Common myeloid progenitor, CD34-positive (primary cell): ENCODE measurements at regions of chr5 and their contacts with region 1.

Region 1: GRCh38 chr5:150560401-150561193 is 52.7 kb downstream of the NDST1 start:
- DNase-seq: peak; percentile 87 to 95 (median 88)
- H3K4me3 ChIP-seq: no peak overlapping the region
- H3K27ac ChIP-seq: no peak overlapping the region
- H3K4me1 ChIP-seq: peaks cover 0 to 30% (median 18%) of the 10 kb centered on the region in 4 experiments
- H3K27me3 ChIP-seq: no peaks in the 10 kb centered on the region

Region 2: DNA sequence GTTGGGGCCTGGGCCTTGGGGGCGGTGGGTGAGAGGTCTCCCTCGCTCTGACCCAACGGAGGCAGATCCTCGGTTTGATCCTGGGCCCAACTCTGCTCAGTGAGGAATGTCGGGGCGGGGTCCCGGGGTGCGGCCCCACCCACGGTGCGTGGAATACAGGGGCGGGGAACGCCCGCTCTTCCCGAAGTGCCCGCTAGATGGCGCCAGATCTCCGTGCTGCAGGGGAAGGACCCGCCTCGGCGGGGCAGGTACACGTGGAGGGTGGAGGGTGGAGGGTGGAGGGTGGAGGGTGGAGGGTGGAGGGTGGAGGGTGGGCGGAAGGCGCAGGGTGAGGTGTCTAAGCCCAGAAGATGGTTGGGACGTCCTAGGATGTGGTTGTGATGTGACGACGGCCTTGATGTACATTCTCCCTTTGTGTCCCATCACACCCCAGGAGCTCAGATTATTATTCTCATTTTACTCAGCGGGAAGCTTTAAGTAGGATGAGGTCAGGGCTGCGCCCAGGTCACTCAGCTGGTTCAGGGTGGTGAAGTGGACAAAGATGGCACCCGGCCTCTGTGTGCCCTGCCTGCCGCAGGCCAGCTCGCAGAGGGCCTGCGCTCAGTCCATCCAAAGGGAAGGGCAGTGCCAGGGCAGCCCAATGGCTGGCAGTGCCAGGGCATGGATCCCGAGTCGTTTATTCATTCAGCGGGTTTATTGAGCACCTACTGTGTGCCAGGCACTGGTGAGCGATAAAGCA is 101.6 kb before region 1 on chr5:
- CTCF ChIA-PET with region 1: interaction called, 28 read pairs
- POLR2A ChIA-PET with region 1: no interaction called
- DNase-seq: peak; percentile 59 to 79 (median 74)
- H3K4me3 ChIP-seq: peak overlapping the region in 3 of 7 experiments; percentile 32 to 56 (median 54)
- H3K27ac ChIP-seq: no peak overlapping the region
- H3K4me1 ChIP-seq: peaks cover 14 to 82% (median 59%) of the 10 kb centered on the region in 4 experiments
- H3K27me3 ChIP-seq: no peaks in the 10 kb centered on the region

Region 3: DNA sequence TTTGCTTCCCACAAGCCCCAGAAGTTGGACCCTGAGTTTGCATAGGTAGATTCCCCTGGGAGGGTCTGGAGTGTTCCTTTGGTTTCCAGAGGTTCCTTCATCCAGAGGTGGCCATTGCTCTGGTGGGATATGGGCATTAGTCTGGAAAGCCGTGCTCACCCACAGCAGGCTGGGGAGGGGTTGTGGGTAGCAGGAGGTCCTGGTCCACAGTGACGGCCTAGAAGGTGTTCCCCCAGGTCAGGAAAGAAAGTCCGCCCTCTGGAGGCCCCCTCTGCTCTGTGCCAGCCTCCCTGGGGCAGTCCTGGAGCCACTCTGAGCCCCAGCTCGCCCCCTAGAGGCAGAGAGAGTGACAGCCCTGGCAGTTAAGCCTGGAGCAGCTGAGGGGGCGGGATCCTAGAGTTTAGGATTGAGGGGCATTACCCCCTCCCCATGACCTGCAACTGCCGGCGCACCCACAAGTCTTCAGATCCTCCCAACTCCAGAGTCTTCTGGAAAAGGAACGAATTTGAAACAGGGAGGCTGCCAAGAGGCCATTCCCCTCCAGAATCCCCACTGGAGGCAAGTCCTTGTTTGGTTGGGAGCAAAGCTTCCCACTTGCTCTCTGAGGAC is 15.9 kb before region 1 on chr5:
- CTCF ChIA-PET with region 1: interaction called, 48 read pairs
- POLR2A ChIA-PET with region 1: no interaction called
- DNase-seq: peak; percentile 55 to 63 (median 57)
- H3K4me3 ChIP-seq: no peak overlapping the region
- H3K27ac ChIP-seq: no peak overlapping the region
- H3K4me1 ChIP-seq: peaks cover 0 to 19% (median 9%) of the 10 kb centered on the region in 4 experiments
- H3K27me3 ChIP-seq: no peaks in the 10 kb centered on the region

Region 4: GRCh38 chr5:150575745-150576448 is 15.3 kb after region 1 on chr5:
- CTCF ChIA-PET with region 1: interaction called, 13 read pairs
- POLR2A ChIA-PET with region 1: no interaction called
- DNase-seq: no peak
- H3K4me3 ChIP-seq: no peak overlapping the region
- H3K27ac ChIP-seq: no peak overlapping the region
- H3K4me1 ChIP-seq: no peaks in the 10 kb centered on the region
- H3K27me3 ChIP-seq: no peaks in the 10 kb centered on the region

Region 5: DNA sequence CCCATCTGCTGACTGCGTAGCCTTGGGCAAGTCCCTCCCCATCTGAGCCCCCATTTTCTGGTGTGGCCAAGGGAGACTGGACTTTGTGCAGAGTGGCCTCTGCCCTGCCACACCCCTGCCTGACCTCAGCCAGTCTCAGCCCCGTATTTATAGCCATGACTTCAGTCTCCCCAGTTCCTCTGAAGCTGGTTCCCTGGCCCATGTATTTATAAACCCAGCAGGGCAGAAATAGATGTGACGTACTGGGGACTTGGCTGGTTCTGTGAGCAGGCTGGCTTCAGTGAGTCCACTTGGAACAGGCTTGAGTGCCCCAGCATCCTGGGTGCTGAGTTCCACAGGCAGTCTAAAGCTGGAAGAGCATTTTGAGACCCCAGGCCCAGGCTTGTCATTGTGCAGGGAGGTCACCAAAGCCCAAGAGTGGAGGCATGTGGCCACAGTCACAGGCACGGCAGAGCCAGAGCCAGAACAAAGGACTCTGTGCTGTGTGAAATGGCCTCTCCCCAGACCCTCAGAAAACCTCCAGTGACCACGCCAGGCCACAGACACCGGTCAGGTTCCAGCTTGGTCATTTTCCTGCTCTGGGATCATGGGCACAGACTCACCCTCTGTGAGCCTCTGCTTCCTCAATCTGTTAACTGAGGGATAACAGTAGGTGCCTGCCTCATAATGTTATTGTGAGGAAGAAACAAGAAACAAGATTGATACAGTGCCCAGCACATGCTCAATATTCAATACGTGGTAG is 49.4 kb after region 1 on chr5:
- CTCF ChIA-PET with region 1: no interaction called
- POLR2A ChIA-PET with region 1: no interaction called
- DNase-seq: no peak
- H3K4me3 ChIP-seq: no peak overlapping the region
- H3K27ac ChIP-seq: no peak overlapping the region
- H3K4me1 ChIP-seq: no peaks in the 10 kb centered on the region
- H3K27me3 ChIP-seq: peaks cover 0 to 2% (median 0%) of the 10 kb centered on the region in 5 experiments

Region 6: GRCh38 chr5:150656191-150657132 is 95.9 kb after region 1 on chr5:
- CTCF ChIA-PET with region 1: interaction called, 63 read pairs
- POLR2A ChIA-PET with region 1: no interaction called
- DNase-seq: peak; percentile 69 to 89 (median 86)
- H3K4me3 ChIP-seq: peak overlapping the region; percentile 41 to 84 (median 67)
- H3K27ac ChIP-seq: no peak overlapping the region
- H3K4me1 ChIP-seq: peaks cover 0 to 15% (median 12%) of the 10 kb centered on the region in 4 experiments
- H3K27me3 ChIP-seq: no peaks in the 10 kb centered on the region